Activated T-helper 1 cell treated with anti-CD3 and anti-CD28 coated beads, Interleukin-12 subunit alpha, Interleukin-12 subunit beta, Interleukin-2, Interleukin-4 antibody, amounts not matched to agents 30 ng/mL and 10 ng/mL and 1 ng/mL, durations not matched to agents 14 hours and 24 hours and 36 hours (primary cell): ENCODE measurements at regions of chr6 and their contacts with region 1.

Region 1: GRCh38 chr6:29649701-29650673 is 6.9 kb upstream of the MOG start:
- DNase-seq: peak; percentile 95
- H3K4me3 Mint-ChIP-seq: peak overlapping the region; percentile 89
- H3K27ac Mint-ChIP-seq: peak overlapping the region; percentile 98
- H3K4me1 Mint-ChIP-seq: peaks cover 20% of the 10 kb centered on the region
- H3K27me3 Mint-ChIP-seq: peaks cover 5% of the 10 kb centered on the region

Region 2: GRCh38 chr6:29632789-29633533 is 17.0 kb before region 1 on chr6 and contains the start of gene GABBR1:
- intact Hi-C with region 1: loop called (anchors 1 kb)
- DNase-seq: peak; percentile 78
- H3K4me3 Mint-ChIP-seq: peak within 1 kb of the TSS; percentile 91
- H3K27ac Mint-ChIP-seq: peak within 1 kb of the TSS; percentile 84
- H3K4me1 Mint-ChIP-seq: peaks cover 44% of the 10 kb centered on the region
- H3K27me3 Mint-ChIP-seq: peaks cover 30% of the 10 kb centered on the region
- total RNA-seq, gene GABBR1: 19.8 and 22.6 TPM in 2 replicates

Region 3: DNA sequence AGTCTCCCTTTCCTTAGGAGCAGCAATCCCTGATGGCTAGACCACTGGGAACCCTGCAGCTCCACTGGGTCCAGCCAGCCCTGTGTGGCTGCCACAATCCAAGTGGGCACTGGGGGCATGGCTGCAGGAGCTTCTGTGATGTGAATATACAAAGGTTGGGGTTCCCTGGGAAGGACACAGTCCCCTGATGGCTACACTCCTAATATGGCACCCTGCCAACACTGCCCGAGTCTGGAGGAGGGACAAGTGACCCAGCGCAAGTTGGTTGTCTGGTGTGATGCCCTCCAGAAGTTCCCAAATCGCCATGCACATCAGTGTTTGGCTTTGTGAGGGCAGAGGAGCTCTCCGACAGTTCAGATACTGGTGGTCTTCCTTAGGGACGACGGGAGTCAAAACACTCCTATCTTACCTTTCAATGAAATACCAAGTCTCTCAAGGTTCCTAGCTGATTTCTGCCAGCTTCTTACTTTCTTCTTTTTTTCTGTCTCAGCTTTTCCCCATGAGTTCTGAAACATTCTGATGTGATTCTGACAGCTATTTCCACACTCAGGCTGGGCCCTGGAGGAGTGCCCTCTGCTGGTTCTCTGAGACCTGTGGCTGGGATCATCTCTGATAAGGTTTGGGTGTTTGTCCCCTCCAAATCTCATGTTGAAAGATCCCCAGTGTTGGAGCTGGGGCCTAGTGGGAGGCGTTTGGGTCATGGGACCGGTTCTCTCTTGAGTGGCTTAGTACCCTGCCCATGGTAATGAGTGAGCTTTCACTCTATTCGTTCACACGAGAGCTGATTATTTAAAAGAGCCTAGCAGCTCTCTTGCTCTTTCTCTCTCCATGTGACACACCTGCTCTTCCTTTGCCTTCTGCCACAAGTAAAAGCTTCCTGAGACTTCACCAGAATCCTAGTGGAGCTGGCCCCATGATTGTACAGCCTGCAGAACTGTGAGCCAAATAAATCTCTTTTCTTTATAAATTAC is 46.5 kb after region 1 on chr6:
- intact Hi-C with region 1: loop called (anchors 2 kb)
- DNase-seq: no peak
- H3K4me3 Mint-ChIP-seq: no peak overlapping the region
- H3K27ac Mint-ChIP-seq: no peak overlapping the region
- H3K4me1 Mint-ChIP-seq: no peaks in the 10 kb centered on the region
- H3K27me3 Mint-ChIP-seq: peaks cover 16% of the 10 kb centered on the region